Activated T-helper 2 cell treated with anti-CD3 and anti-CD28 coated beads, Interferon-gamma antibody, Interleukin-2, Interleukin-4, amounts not matched to agents 10 μg/mL and 5 μg/mL and 100 μg/mL, durations not matched to agents 14 hours and 24 hours and 36 hours (primary cell): ENCODE measurements at regions of chr11 and their contacts with region 1.

Region 1: DNA sequence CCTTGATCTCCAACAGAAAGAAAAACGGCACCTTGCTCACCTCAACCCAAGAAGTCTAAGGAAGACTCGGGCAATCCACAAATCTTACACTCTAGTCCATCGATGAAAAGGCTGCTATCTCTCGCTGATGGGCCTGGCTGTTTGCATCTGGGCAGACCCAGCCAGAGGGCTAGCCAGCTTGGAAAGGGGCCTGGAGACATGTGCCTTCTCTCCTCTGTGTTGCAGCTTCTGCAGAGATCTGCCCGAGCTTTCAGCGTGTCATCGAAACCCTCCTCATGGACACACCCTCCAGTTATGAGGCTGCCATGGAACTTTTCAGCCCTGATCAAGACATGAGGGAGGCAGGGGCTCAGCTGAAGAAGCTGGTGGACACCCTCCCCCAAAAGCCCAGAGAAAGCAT is 3.2 kb downstream of the SCGB1A1 start:
- DNase-seq: no peak
- H3K4me3 Mint-ChIP-seq: no peak overlapping the region
- H3K27ac Mint-ChIP-seq: no peak overlapping the region
- H3K4me1 Mint-ChIP-seq: peaks cover 10% of the 10 kb centered on the region
- H3K27me3 Mint-ChIP-seq: no peaks in the 10 kb centered on the region

Region 2: GRCh38 chr11:62383822-62384221 is 38.2 kb before region 1 on chr11:
- intact Hi-C with region 1: loop called (anchors 5 kb)
- DNase-seq: no peak
- H3K4me3 Mint-ChIP-seq: no peak overlapping the region
- H3K27ac Mint-ChIP-seq: no peak overlapping the region
- H3K4me1 Mint-ChIP-seq: peaks cover 20% of the 10 kb centered on the region
- H3K27me3 Mint-ChIP-seq: peaks cover 15% of the 10 kb centered on the region

Region 3: DNA sequence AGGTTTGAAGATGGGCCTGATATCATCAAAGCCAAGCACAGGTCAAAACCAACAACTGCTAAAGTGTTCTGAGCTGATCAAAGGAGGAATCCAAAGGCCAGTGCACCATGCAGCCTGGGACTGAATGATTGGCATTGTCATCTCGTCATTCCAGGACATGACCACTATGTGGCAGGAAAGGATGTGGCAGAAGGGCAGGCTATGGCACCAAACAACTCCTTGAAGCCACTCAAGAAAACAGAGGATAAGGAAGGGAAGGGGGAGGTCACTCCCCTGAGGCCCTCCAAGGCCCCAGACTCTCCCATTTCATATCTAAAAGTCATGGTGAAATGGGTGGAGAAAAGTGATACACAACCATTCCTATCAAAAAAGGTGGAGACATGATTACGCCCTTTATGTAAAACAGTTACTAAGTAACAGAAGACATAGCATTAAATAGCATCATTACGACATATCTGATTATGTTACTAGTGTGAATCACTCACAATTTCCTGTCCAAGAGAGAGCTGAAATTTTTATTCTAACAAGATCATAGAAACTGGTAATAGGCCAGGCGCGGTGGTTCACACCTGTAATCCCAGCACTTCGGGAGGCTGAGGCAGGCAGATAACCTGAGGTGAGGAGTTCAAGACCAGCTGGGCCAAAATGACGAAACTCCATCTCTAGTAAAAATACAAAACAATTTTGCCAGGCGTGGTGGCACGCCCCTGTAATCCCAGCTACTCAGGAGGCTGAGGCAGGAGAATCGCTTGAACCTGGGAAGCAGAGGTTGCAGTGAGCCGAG is 75.3 kb after region 1 on chr11:
- intact Hi-C with region 1: loop called (anchors 5 kb)
- DNase-seq: no peak
- H3K4me3 Mint-ChIP-seq: no peak overlapping the region
- H3K27ac Mint-ChIP-seq: no peak overlapping the region
- H3K4me1 Mint-ChIP-seq: peaks cover 3% of the 10 kb centered on the region
- H3K27me3 Mint-ChIP-seq: peaks cover 16% of the 10 kb centered on the region